Calu3 (cell line): ENCODE measurements at regions of chr2 and their contacts with region 1.

Region 1: GRCh38 chr2:189466660-189467059 is 25.4 kb downstream of the WDR75 start:
- DNase-seq: peak; percentile 23
- H3K4me3 Mint-ChIP-seq: no peak overlapping the region
- H3K27ac Mint-ChIP-seq: no peak overlapping the region
- H3K4me1 Mint-ChIP-seq: no peaks in the 10 kb centered on the region
- H3K27me3 Mint-ChIP-seq: no peaks in the 10 kb centered on the region
- CTCF ChIP-seq: peak; percentile 61

Region 2: GRCh38 chr2:189521699-189522434 is 55.2 kb after region 1 on chr2:
- CTCF ChIA-PET with region 1: no interaction called
- intact Hi-C with region 1: loop called (anchors 5 kb)
- DNase-seq: no peak
- H3K4me3 Mint-ChIP-seq: peak overlapping the region; percentile 35
- H3K27ac Mint-ChIP-seq: peak overlapping the region; percentile 72
- H3K4me1 Mint-ChIP-seq: peaks cover 25% of the 10 kb centered on the region
- H3K27me3 Mint-ChIP-seq: no peaks in the 10 kb centered on the region
- CTCF ChIP-seq: no peak

Region 3: GRCh38 chr2:189552334-189552990 is 85.8 kb after region 1 on chr2:
- CTCF ChIA-PET with region 1: no interaction called
- intact Hi-C with region 1: loop called (anchors 2 kb)
- DNase-seq: no peak
- H3K4me3 Mint-ChIP-seq: no peak overlapping the region
- H3K27ac Mint-ChIP-seq: no peak overlapping the region
- H3K4me1 Mint-ChIP-seq: peaks cover 58% of the 10 kb centered on the region
- H3K27me3 Mint-ChIP-seq: no peaks in the 10 kb centered on the region
- CTCF ChIP-seq: no peak

Region 4: GRCh38 chr2:189579592-189580186 is 113.0 kb after region 1 on chr2:
- CTCF ChIA-PET with region 1: no interaction called
- intact Hi-C with region 1: loop called (anchors 5 kb)
- DNase-seq: peak; percentile 22
- H3K4me3 Mint-ChIP-seq: peak overlapping the region; percentile 98
- H3K27ac Mint-ChIP-seq: peak overlapping the region; percentile 93
- H3K4me1 Mint-ChIP-seq: peaks cover 73% of the 10 kb centered on the region
- H3K27me3 Mint-ChIP-seq: no peaks in the 10 kb centered on the region
- CTCF ChIP-seq: no peak

Region 5: GRCh38 chr2:189621781-189622180 is 155.1 kb after region 1 on chr2:
- CTCF ChIA-PET with region 1: no interaction called
- intact Hi-C with region 1: no loop called
- DNase-seq: no peak
- H3K4me3 Mint-ChIP-seq: no peak overlapping the region
- H3K27ac Mint-ChIP-seq: no peak overlapping the region
- H3K4me1 Mint-ChIP-seq: peaks cover 19% of the 10 kb centered on the region
- H3K27me3 Mint-ChIP-seq: no peaks in the 10 kb centered on the region
- CTCF ChIP-seq: no peak

Region 6: GRCh38 chr2:189633392-189633811 is 166.7 kb after region 1 on chr2:
- CTCF ChIA-PET with region 1: no interaction called
- intact Hi-C with region 1: loop called (anchors 1 kb)
- DNase-seq: peak; percentile 29
- H3K4me3 Mint-ChIP-seq: no peak overlapping the region
- H3K27ac Mint-ChIP-seq: no peak overlapping the region
- H3K4me1 Mint-ChIP-seq: peaks cover 2% of the 10 kb centered on the region
- H3K27me3 Mint-ChIP-seq: no peaks in the 10 kb centered on the region
- CTCF ChIP-seq: peak; percentile 72